ENCODE measurements at regions of chr17 and their contacts with region 1.

Region 1: GRCh38 chr17:65137021-65137991 is at the start of gene RGS9:
- DNase-seq: peak; percentile 77
- H3K4me3 ChIP-seq: peak within 1 kb of the TSS in 2 of 3 experiments; percentile 17 to 24
- H3K27ac ChIP-seq: no peak within 1 kb of the TSS
- H3K4me1 ChIP-seq: peaks cover 5% of the 10 kb centered on the region
- H3K27me3 ChIP-seq: peaks cover 13 to 17% of the 10 kb centered on the region in 2 experiments
- CTCF ChIP-seq: peak; percentile 91 to 97
- POLR2A ChIP-seq: no peak
- total RNA-seq, gene RGS9: 1.4 and 1.7 TPM in 2 replicates

Region 2: DNA sequence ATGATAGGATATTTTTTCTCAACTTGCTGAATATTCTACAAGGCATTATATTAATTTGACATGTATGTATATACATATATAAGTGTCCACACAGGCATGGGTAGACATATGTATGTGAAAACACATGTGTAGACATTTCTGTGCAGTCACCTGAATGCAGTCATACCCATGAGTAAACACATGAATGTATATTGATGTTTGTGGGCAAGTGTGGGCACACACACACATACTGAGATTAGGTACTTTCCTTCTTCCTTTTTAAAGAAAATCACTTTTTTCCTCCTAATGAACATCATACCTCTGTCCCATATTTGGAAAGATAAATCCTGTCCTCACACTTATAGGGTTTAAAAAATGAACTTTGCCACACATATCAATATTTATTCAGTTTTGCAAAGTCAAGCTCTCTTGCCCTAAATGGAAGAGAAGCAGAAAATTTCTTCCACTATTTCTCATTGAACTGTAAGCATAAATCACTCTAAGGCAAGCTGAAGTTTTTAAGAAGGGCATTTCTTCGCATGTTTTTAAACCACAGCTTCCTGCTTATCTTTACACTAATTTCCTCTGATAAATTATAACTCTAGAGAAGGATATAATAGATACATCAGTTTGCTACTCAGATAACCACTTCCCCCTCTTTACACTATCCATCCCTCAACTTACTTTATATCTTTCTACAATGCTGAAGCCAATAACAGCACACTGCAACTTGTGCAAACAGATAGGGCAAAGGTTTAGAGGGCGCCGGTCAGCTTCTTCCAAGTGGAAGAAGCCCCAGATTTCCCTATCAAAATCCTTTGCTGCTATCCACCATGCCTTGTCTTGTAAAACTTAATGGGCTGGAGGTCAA is 168.4 kb before region 1 on chr17:
- CTCF ChIA-PET with region 1: no interaction called
- POLR2A ChIA-PET with region 1: no interaction called
- dilution Hi-C with region 1: no loop called
- intact Hi-C with region 1: loop called (anchors 2 kb)
- DNase-seq: no peak
- H3K4me3 ChIP-seq: no peak overlapping the region
- H3K27ac ChIP-seq: no peak overlapping the region
- H3K4me1 ChIP-seq: peaks cover 7% of the 10 kb centered on the region
- H3K27me3 ChIP-seq: no peaks in the 10 kb centered on the region
- CTCF ChIP-seq: no peak
- POLR2A ChIP-seq: no peak

Region 3: GRCh38 chr17:65122836-65123756 is 14.2 kb before region 1 on chr17:
- CTCF ChIA-PET with region 1: interaction called, 26 read pairs
- POLR2A ChIA-PET with region 1: no interaction called
- dilution Hi-C with region 1: no loop called
- intact Hi-C with region 1: loop called (anchors 1 kb)
- DNase-seq: peak; percentile 83
- H3K4me3 ChIP-seq: peak overlapping the region; percentile 39 to 82 (median 71)
- H3K27ac ChIP-seq: peak overlapping the region; percentile 67
- H3K4me1 ChIP-seq: peaks cover 14% of the 10 kb centered on the region
- H3K27me3 ChIP-seq: peaks cover 6 to 8% of the 10 kb centered on the region in 2 experiments
- CTCF ChIP-seq: no peak
- POLR2A ChIP-seq: peak; percentile 81

Region 4: GRCh38 chr17:65173284-65173793 is 36.0 kb after region 1 on chr17:
- CTCF ChIA-PET with region 1: interaction called, 25 read pairs
- POLR2A ChIA-PET with region 1: no interaction called
- dilution Hi-C with region 1: no loop called
- intact Hi-C with region 1: loop called (anchors 2 kb)
- DNase-seq: peak; percentile 54
- H3K4me3 ChIP-seq: no peak overlapping the region
- H3K27ac ChIP-seq: no peak overlapping the region
- H3K4me1 ChIP-seq: peaks cover 31% of the 10 kb centered on the region
- H3K27me3 ChIP-seq: peaks cover 0 to 2% of the 10 kb centered on the region in 2 experiments
- CTCF ChIP-seq: no peak
- POLR2A ChIP-seq: no peak

Region 5: GRCh38 chr17:65198653-65199382 is 61.5 kb after region 1 on chr17:
- CTCF ChIA-PET with region 1: interaction called, 38 read pairs
- POLR2A ChIA-PET with region 1: no interaction called
- dilution Hi-C with region 1: no loop called
- intact Hi-C with region 1: loop called (anchors 1 kb)
- DNase-seq: peak; percentile 67
- H3K4me3 ChIP-seq: no peak overlapping the region
- H3K27ac ChIP-seq: no peak overlapping the region
- H3K4me1 ChIP-seq: no peaks in the 10 kb centered on the region
- H3K27me3 ChIP-seq: peaks cover 0 to 4% of the 10 kb centered on the region in 2 experiments
- CTCF ChIP-seq: peak; percentile 41 to 54
- POLR2A ChIP-seq: no peak

Measured in endothelial cell of umbilical vein (primary cell).